ENCODE measurements at regions of chr4 and their contacts with region 1.

Region 1: GRCh38 chr4:40046311-40046980 is 10.2 kb upstream of the N4BP2 start:
- DNase-seq: peak; percentile 93
- ATAC-seq: peak; percentile 97
- H3K4me3 ChIP-seq: peak overlapping the region in 2 of 3 experiments; percentile 25 to 32; a peak in 2 of 6 replicates
- H3K27ac ChIP-seq: peak overlapping the region; percentile 62
- H3K4me1 ChIP-seq: peaks cover 28% of the 10 kb centered on the region
- H3K27me3 ChIP-seq: no peaks in the 10 kb centered on the region; a peak in 1 of 5 replicates
- CTCF ChIP-seq: peak; percentile 25
- EP300 ChIP-seq: peak in 1 of 2 experiments; percentile 65; a peak in 2 of 4 replicates
- POLR2A ChIP-seq: no peak
- RAD21 ChIP-seq: 0 out of 2 replicates have a peak, but pooled peaks have one; percentile 18

Region 2: DNA sequence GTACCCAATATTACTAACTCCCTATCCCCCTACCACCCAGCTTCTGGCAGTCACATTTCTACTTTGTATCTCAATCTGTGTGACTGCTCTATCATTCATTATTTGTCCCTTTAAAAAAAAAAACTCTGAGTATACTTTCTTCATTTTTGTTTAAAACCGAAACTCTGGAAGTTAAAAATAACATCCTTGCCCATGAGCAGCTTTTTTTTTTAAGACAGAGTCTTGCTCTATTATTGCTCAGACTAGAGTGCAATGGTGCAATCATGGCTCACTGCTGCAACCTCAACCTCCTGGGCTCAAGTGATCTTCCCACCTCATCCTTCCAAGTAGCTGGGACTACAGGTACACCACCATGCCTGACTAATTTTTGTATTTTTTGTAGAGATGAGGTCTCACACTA is 332.8 kb before region 1 on chr4:
- CTCF ChIA-PET with region 1: no interaction called
- POLR2A ChIA-PET with region 1: no interaction called
- in situ Hi-C with region 1: no loop called
- intact Hi-C with region 1: no loop called
- DNase-seq: no peak
- ATAC-seq: no peak
- H3K4me3 ChIP-seq: no peak overlapping the region
- H3K27ac ChIP-seq: no peak overlapping the region
- H3K4me1 ChIP-seq: peaks cover 28% of the 10 kb centered on the region
- H3K27me3 ChIP-seq: no peaks in the 10 kb centered on the region
- CTCF ChIP-seq: no peak
- EP300 ChIP-seq: no peak
- POLR2A ChIP-seq: no peak
- RAD21 ChIP-seq: no peak

Region 3: DNA sequence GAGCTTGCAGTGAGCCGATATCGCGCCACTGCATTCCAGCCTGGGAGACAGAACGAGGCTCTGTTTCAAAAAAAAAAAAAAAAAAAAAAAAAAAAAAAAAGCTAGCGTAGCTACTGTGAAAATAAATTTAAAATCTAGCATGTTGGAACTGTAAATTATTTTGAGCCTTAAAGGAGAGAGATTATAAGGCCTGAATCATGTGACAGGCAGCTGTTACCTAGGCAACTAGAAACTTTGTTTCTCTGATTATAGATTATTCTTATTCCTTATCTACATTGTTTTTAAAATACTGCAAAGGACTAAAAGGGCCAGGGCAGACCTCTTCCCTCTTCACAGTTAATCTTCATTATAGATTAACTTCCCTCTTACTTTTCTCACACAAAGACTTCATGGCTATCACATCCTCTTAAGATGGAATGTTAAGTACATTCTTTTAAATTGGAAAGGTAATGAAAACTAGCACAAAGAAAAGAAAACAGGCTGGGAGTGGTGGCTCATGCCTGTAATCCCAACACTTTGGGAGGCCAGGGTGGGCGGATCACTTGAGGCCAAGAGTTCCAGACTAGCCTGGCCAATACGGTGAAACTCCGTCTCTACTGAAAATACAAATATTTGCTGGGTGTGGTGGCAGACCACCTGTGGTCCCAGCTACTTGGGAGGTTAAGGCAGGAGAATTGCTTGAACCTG is 47.6 kb before region 1 on chr4:
- CTCF ChIA-PET with region 1: no interaction called
- POLR2A ChIA-PET with region 1: no interaction called
- in situ Hi-C with region 1: no loop called
- intact Hi-C with region 1: loop called (anchors 10 kb)
- DNase-seq: no peak
- ATAC-seq: no peak
- H3K4me3 ChIP-seq: no peak overlapping the region
- H3K27ac ChIP-seq: no peak overlapping the region
- H3K4me1 ChIP-seq: no peaks in the 10 kb centered on the region
- H3K27me3 ChIP-seq: no peaks in the 10 kb centered on the region
- CTCF ChIP-seq: no peak
- EP300 ChIP-seq: no peak
- POLR2A ChIP-seq: no peak
- RAD21 ChIP-seq: no peak

Measured in HepG2 (cell line).